ENCODE measurements at regions of chr1 and their contacts with region 1.

Region 1: DNA sequence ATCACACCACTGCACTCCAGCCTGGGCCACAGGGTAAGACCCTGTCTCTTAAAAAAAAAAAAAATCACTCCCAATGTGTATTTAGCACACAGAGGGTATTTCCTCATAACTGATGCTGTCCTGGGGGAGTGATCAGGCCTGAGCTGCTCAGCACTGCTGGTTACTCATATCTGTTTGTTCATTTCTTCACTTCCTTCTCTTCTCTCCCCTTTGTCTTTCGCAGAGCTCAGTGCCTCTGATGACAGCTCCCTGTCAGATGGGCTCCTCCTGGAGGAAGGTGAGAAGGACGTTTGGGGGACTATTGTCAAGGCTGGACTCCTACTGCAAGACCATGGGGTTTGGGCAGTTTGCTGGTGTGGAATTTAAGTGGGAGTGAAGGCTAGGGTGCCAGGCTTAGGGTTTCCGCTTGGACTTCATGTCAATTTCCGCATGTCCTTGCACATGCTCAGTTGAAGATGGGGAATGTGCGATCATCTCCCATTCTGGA is 13.0 kb downstream of the INAVA start:
- DNase-seq: peak; percentile 65
- ATAC-seq: peak; percentile 62
- H3K4me3 ChIP-seq: no peak overlapping the region
- H3K27ac ChIP-seq: 0 out of 2 replicates have a peak overlapping the region, but pooled peaks have one; percentile 0
- H3K4me1 ChIP-seq: peaks cover 18% of the 10 kb centered on the region
- H3K27me3 ChIP-seq: no peaks in the 10 kb centered on the region
- CTCF ChIP-seq: no peak; the same call in 1 of the 2 replicates

Region 2: GRCh38 chr1:200323918-200324317 is 583.7 kb before region 1 on chr1:
- CTCF ChIA-PET with region 1: no interaction called
- POLR2A ChIA-PET with region 1: no interaction called
- intact Hi-C with region 1: no loop called
- DNase-seq: peak; percentile 55
- ATAC-seq: no peak
- H3K4me3 ChIP-seq: no peak overlapping the region
- H3K27ac ChIP-seq: no peak overlapping the region
- H3K4me1 ChIP-seq: no peaks in the 10 kb centered on the region
- H3K27me3 ChIP-seq: no peaks in the 10 kb centered on the region
- CTCF ChIP-seq: no peak

Region 3: DNA sequence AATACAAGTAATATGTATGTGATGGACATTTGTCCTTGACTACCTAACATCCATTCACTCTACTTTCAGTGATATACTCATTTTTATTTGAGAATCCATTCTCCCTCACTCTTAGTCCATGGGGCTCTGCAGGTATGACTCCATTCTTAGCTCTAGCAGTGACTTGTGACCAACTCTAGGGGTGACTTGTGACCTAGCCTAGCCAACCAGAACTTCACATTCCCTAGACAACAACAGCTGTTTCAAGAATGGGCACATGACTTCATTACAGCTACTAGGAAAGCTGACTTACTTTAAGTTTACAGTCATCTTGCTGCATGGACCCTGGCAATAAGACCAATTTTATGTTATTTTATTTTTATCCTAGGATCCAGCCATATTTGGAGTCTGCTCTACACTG is 214.3 kb before region 1 on chr1:
- CTCF ChIA-PET with region 1: no interaction called
- POLR2A ChIA-PET with region 1: no interaction called
- intact Hi-C with region 1: no loop called
- DNase-seq: no peak
- ATAC-seq: no peak
- H3K4me3 ChIP-seq: no peak overlapping the region
- H3K27ac ChIP-seq: no peak overlapping the region
- H3K4me1 ChIP-seq: 0 out of 2 replicates have a peak, but pooled peaks cover 5% of the 10 kb centered on the region
- H3K27me3 ChIP-seq: no peaks in the 10 kb centered on the region
- CTCF ChIP-seq: no peak

Region 4: GRCh38 chr1:200811704-200812103 is 96.0 kb before region 1 on chr1:
- CTCF ChIA-PET with region 1: no interaction called
- POLR2A ChIA-PET with region 1: no interaction called
- intact Hi-C with region 1: no loop called
- DNase-seq: no peak
- ATAC-seq: no peak
- H3K4me3 ChIP-seq: no peak overlapping the region
- H3K27ac ChIP-seq: no peak overlapping the region
- H3K4me1 ChIP-seq: no peaks in the 10 kb centered on the region
- H3K27me3 ChIP-seq: no peaks in the 10 kb centered on the region
- CTCF ChIP-seq: no peak

Region 5: DNA sequence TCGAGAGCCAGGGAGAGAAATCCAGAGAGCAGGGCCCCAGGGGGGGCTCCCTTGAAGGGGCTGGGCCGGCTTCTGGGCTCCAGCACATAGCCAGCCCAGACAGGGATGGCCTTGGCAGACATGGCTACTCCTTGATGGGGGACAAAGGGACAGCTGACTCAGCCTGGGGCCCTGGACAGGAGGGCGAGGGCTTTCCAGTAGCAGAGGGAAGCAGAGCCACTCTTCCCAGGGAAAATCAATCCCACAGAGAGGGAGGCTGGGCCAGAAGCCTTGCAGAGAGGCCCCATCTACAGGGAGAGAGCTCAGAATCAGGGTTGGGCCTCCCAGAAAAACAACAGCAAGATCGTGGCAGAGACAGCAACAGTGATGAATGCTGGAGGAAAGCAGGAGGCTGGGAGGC is 298.5 kb after region 1 on chr1:
- CTCF ChIA-PET with region 1: no interaction called
- POLR2A ChIA-PET with region 1: no interaction called
- intact Hi-C with region 1: no loop called
- DNase-seq: no peak
- ATAC-seq: no peak
- H3K4me3 ChIP-seq: no peak overlapping the region
- H3K27ac ChIP-seq: no peak overlapping the region
- H3K4me1 ChIP-seq: no peaks in the 10 kb centered on the region
- H3K27me3 ChIP-seq: peaks cover 53% of the 10 kb centered on the region
- CTCF ChIP-seq: no peak

Region 6: DNA sequence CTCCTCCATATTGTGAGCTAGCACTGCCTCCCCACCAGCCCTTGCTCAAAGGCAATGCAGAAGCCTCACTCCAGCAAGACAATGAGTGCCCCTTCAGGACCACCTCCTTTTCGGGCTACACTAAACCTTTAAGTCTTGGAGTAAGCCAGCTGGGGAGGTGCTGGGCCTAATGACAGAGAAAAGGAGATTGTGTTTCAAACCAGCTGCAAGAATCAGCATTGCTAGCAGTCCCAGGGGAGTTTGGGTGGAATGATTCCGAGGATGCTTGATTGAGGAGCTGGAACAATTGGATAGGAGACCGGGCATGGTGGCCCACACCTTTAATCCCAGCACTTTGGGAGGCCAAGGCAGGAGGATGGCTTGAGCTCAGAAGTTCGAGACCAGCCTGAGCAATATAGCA is 1160.9 kb after region 1 on chr1:
- CTCF ChIA-PET with region 1: no interaction called
- POLR2A ChIA-PET with region 1: interaction called, 10 read pairs
- intact Hi-C with region 1: no loop called
- DNase-seq: no peak
- ATAC-seq: no peak
- H3K4me3 ChIP-seq: no peak overlapping the region
- H3K27ac ChIP-seq: no peak overlapping the region
- H3K4me1 ChIP-seq: peaks cover 7% of the 10 kb centered on the region; the same call in 1 of the 2 replicates
- H3K27me3 ChIP-seq: no peaks in the 10 kb centered on the region
- CTCF ChIP-seq: no peak

Measured in PC-3 (cell line).